Gastrocnemius medialis (tissue), 4 donors: ENCODE measurements at regions of chr7 and their contacts with region 1.

Region 1: GRCh38 chr7:143331179-143331820 is 15.4 kb downstream of the CLCN1 start:
- DNase-seq: peak; percentile 76 to 82
- ATAC-seq: peak; percentile 95 to 99
- H3K4me3 ChIP-seq: no peak overlapping the region
- H3K27ac ChIP-seq: peak overlapping the region; percentile 78 to 88 (median 86)
- H3K4me1 ChIP-seq: peaks cover 3 to 31% of the 10 kb centered on the region in 2 donors
- H3K27me3 ChIP-seq: no peaks in the 10 kb centered on the region
- CTCF ChIP-seq: no peak
- POLR2A ChIP-seq: no peak

Region 2: GRCh38 chr7:143318656-143319055 is 12.6 kb before region 1 on chr7:
- in situ Hi-C with region 1: no loop called
- intact Hi-C with region 1: loop called (anchors 1 kb)
- DNase-seq: peak; percentile 67 to 87
- ATAC-seq: peak; percentile 73 to 85
- H3K4me3 ChIP-seq: no peak overlapping the region
- H3K27ac ChIP-seq: peak overlapping the region; percentile 76 to 99 (median 90)
- H3K4me1 ChIP-seq: peaks cover 44 to 59% of the 10 kb centered on the region in 2 donors
- H3K27me3 ChIP-seq: no peaks in the 10 kb centered on the region
- CTCF ChIP-seq: peak in 3 of 5 experiments; percentile 12 to 36 (median 24)
- POLR2A ChIP-seq: no peak

Region 3: DNA sequence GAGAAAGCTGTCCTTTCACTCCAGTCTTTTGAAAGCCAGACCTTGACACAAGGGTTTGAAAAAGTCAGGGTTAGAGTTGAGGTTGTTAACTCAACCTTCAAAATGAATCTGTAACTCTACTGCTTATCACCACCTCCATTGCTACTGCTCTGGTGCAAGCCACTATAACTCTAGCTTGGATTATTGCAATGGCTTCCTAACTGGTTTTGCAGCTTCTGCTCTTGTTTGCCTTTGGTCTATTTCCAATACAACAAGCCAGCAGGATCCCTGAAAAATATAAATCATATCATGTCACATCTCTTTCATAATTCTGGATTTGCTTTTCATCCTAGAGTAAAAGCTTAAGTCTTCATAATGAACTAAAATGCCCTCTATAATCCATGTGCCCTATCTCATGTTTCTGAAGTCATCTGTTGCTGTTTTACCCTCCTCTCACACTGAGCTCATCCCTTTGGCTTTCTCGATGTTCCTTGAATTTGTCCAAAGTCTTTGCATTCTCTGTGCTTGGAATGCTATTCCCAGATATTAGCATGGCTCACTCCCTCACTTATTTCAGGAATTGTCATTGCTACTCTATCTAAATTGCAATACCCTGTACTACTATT is 122.9 kb after region 1 on chr7:
- in situ Hi-C with region 1: no loop called
- intact Hi-C with region 1: no loop called
- DNase-seq: no peak
- ATAC-seq: no peak
- H3K4me3 ChIP-seq: no peak overlapping the region
- H3K27ac ChIP-seq: no peak overlapping the region
- H3K4me1 ChIP-seq: no peaks in the 10 kb centered on the region
- H3K27me3 ChIP-seq: no peaks in the 10 kb centered on the region
- CTCF ChIP-seq: no peak
- POLR2A ChIP-seq: no peak